Ascending aorta (tissue), 2 donors: ENCODE measurements at regions of chr16 and their contacts with region 1.

Region 1: DNA sequence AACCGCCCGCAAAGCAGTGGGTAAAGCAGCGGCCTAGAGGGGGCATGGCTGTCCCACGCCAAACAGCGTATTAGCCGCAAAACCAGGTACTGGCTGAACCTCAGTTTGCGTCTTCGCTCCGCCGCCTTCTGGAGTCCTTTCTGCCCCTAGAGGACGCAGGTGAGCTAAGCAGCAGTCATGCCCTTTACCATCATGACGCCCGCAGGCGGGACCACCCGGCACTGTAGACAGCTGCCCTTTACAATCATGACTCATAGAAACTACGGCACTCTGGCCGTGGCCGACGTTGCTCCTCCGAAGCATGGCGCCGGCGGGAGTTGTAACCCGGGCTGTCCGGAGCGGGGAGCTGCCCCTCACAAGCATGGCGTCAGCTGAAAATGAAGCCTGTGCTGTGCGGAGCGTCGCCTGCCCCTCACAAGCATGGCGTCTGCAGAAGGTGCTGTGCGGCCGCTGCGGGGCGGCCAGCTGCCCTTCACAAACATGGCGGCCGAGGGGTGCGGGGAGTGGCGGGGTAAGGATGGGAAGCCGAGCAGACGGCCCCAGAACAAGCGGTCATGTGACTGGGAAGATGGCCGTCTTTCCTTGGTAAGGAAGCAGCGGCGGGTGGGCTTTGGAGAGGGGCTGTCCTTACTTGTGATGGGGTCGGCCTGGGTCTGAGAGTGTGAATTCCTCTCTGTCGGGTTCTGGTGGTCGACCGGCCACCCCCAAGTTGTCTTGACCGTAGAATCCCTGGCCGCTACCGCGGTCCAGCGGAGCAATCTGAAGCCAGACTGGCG is at the start of gene VPS35L:
- DNase-seq: peak; percentile 91 to 99
- H3K4me3 ChIP-seq: peak within 1 kb of the TSS; percentile 74 to 75
- H3K27ac ChIP-seq: peak within 1 kb of the TSS; percentile 91
- H3K4me1 ChIP-seq: peaks cover 0 to 8% of the 10 kb centered on the region in 2 donors
- H3K27me3 ChIP-seq: no peaks in the 10 kb centered on the region
- CTCF ChIP-seq: peak; percentile 70 to 88 (median 81)
- total RNA-seq, gene VPS35L: 44.4 TPM

Region 2: DNA sequence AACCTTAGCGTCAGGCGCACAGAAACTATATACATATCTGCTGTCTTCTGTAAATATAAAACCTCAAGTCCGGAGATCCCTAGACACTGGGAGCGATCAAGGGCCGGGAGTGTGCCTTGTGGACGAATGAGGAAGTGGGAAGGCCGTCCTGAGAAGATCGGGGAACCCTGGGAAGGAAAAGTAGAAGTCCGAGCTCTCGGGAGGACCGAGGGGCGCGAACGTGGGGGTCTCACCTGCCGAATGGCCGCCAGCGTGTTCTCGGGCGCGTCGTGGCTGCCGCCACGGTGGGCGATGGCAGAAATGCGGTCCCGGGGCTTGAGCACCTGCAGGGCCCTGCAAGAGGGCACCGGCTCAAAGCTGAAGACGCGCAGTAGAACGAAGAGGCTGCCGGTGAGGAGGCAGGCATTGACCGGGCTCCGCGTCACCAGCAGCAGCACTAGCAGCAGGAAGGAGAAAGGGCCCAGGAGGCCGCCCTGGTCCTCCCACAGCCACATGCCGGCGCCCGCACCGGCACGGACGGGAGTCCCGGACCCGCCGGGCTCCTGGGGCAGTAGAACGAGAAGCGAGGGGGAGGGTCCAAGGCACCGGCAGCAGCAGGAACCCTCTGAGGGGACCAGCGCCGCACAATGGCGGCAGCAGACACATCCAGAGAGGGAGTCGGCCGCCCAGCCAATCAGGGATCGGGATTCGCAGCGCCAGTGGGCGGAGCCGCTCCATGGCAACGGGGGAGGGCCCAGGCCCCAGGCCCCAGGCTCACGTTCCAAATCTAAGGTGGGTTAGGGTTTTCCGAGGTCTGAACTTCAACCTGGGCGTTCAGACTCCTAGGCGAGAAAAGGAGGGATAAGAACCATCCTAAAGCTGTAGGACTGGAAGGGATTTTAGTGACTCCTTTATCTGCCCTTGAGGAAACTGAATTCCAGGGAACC is 33.6 kb before region 1 on chr16 and contains the start of gene GDE1:
- intact Hi-C with region 1: loop called (anchors 1 kb)
- DNase-seq: peak; percentile 82 to 97
- H3K4me3 ChIP-seq: peak within 1 kb of the TSS; percentile 82 to 89
- H3K27ac ChIP-seq: peak within 1 kb of the TSS; percentile 85 to 91
- H3K4me1 ChIP-seq: peaks cover 6 to 31% of the 10 kb centered on the region in 2 donors
- H3K27me3 ChIP-seq: no peaks in the 10 kb centered on the region
- CTCF ChIP-seq: peak; percentile 17 to 55 (median 50)
- total RNA-seq, gene GDE1: 27.4 TPM

Region 3: DNA sequence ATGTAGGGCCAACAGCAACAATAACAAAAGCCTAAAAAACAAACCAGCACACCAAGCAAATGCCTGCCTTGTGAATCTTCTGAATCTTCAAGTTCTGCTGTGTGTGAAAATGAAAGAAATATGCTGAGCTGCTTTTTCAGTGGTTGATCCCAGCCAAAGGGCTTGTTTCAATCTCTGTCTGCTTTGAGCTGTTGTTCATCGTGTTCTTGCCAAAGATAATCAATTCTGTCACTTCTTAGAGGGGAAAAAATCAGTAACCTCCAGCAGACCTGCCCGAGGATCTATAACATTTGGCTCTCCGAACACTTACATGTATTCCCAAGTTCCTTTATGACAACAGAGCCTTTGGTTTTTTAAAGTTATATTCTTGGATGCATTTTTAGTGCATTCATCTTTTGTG is 66.1 kb after region 1 on chr16:
- intact Hi-C with region 1: no loop called
- DNase-seq: no peak
- H3K4me3 ChIP-seq: no peak overlapping the region
- H3K27ac ChIP-seq: no peak overlapping the region
- H3K4me1 ChIP-seq: no peaks in the 10 kb centered on the region
- H3K27me3 ChIP-seq: no peaks in the 10 kb centered on the region
- CTCF ChIP-seq: no peak

Region 4: GRCh38 chr16:19717771-19718602 is 162.6 kb after region 1 on chr16 and contains the starts of genes IQCK and KNOP1:
- intact Hi-C with region 1: loop called (anchors 1 kb)
- DNase-seq: peak; percentile 48 to 95
- H3K4me3 ChIP-seq: peak within 1 kb of the TSS; percentile 89 to 90
- H3K27ac ChIP-seq: peak within 1 kb of the TSS; percentile 46 to 80
- H3K4me1 ChIP-seq: peaks cover 0 to 12% of the 10 kb centered on the region in 2 donors
- H3K27me3 ChIP-seq: no peaks in the 10 kb centered on the region
- CTCF ChIP-seq: peak in 1 of 3 experiments; percentile 2
- total RNA-seq, gene IQCK: not detected
- total RNA-seq, gene KNOP1: 2.4 TPM

Region 5: DNA sequence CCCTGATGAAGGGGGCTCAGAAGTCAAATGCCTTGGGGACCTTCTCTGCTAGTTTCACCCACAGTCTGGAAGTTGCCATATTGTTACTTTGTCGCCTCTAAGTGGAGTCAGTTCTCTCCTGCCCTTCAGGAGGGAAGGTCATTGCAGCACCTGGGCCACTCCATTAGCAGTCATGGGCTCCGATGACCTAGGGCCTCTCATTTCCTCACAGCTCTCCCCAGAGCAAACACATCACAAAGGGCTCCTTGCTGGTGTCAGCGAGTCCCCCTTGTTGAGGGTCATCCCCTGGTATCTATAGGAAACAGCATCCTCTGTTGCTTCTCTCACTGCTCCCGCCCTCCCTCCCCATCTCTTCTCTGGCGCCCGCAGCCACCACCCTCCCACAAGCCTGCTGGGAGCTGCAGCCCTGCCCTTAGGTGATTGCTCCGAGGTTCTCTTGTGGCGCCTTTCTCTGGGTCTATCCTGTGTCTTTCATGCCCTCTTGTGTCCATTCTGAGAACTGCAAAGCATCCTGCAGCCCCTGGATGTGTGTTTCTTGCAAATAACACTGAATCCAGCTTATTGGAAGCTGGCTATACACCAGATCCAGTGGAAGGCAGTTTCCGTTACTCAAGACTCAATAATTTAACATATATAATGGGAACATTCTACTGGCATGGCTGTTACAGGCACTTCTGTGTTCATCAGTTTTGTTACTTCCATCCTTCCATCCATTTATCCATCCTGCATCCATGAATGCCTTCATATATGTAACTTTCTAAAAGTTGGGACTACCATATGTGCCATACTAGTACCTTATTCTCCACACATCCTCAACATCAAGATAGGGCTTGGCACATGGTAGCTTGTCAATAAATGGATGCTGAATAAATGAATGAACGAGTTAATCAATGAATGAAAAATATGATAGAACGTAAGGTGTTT is 828.0 kb after region 1 on chr16:
- intact Hi-C with region 1: loop called (anchors 5 kb)
- DNase-seq: peak in 1 of 2 donors; percentile 75
- H3K4me3 ChIP-seq: no peak overlapping the region
- H3K27ac ChIP-seq: no peak overlapping the region
- H3K4me1 ChIP-seq: peaks cover 0 to 7% of the 10 kb centered on the region in 2 donors
- H3K27me3 ChIP-seq: peaks cover 4% of the 10 kb centered on the region
- CTCF ChIP-seq: peak; percentile 24 to 84 (median 83)